ENCODE measurements at regions of chr11 and their contacts with region 1.

Region 1: DNA sequence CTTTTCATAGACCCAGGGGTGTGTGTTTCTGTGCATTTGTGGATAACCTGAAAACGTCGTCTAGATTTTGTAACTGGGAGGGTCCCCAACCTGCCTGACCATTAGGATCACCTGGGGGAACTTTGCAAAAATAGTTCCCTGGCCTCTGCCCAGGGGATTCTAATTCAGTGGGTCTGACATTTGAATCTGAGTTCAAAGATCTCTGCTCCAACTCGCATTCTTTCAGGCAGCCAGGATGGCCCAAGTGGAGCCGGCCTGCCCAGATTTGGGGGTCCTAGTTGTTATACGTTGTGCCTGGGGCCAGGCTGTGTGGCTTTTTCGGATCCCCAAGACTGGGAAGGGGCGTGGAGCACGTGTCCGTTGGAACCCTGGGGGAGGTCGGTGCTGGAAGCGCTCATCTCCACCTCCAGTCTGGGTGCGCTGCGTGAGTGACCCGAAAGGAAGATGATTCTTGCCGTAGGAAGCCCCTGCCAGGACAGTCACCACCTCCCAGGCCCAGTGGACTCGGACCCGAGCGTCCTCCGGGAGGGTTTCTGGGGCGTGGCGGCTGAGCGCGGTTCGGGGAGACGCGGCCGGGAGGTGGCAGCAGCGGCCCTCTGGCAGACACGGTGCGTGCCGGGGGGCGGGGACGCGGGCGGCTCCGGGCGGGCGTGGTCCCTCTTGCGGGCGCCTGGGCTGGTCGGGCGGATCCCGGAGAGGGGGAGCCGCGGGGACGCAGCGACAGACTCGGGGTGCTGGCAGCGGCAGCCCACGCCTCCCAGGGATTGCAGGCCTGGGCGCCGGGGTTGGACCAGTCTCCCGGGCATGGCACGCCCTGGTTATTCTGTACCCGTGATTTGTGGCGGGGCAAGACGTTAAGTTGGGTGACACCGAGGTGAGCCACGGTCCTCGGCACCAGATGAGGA is 29.2 kb upstream of the PLET1 start:
- DNase-seq: peak; percentile 91
- ATAC-seq: peak; percentile 92
- H3K4me3 Mint-ChIP-seq: peak overlapping the region; percentile 69
- H3K27ac Mint-ChIP-seq: peak overlapping the region; percentile 82
- H3K4me1 Mint-ChIP-seq: peaks cover 29% of the 10 kb centered on the region
- H3K27me3 Mint-ChIP-seq: no peaks in the 10 kb centered on the region

Region 2: GRCh38 chr11:112453601-112454577 is 164.0 kb after region 1 on chr11:
- CTCF ChIA-PET with region 1: interaction called, 4 read pairs
- POLR2A ChIA-PET with region 1: no interaction called
- intact Hi-C with region 1: loop called (anchors 1 to 2 kb)
- DNase-seq: peak; percentile 75
- ATAC-seq: no peak
- H3K4me3 Mint-ChIP-seq: no peak overlapping the region
- H3K27ac Mint-ChIP-seq: no peak overlapping the region
- H3K4me1 Mint-ChIP-seq: no peaks in the 10 kb centered on the region
- H3K27me3 Mint-ChIP-seq: no peaks in the 10 kb centered on the region

Region 3: GRCh38 chr11:112537846-112538330 is 248.0 kb after region 1 on chr11:
- CTCF ChIA-PET with region 1: no interaction called
- POLR2A ChIA-PET with region 1: no interaction called
- intact Hi-C with region 1: loop called (anchors 5 kb)
- DNase-seq: no peak
- ATAC-seq: peak; percentile 76
- H3K4me3 Mint-ChIP-seq: no peak overlapping the region
- H3K27ac Mint-ChIP-seq: peak overlapping the region; percentile 52
- H3K4me1 Mint-ChIP-seq: peaks cover 51% of the 10 kb centered on the region
- H3K27me3 Mint-ChIP-seq: peaks cover 9% of the 10 kb centered on the region

Region 4: DNA sequence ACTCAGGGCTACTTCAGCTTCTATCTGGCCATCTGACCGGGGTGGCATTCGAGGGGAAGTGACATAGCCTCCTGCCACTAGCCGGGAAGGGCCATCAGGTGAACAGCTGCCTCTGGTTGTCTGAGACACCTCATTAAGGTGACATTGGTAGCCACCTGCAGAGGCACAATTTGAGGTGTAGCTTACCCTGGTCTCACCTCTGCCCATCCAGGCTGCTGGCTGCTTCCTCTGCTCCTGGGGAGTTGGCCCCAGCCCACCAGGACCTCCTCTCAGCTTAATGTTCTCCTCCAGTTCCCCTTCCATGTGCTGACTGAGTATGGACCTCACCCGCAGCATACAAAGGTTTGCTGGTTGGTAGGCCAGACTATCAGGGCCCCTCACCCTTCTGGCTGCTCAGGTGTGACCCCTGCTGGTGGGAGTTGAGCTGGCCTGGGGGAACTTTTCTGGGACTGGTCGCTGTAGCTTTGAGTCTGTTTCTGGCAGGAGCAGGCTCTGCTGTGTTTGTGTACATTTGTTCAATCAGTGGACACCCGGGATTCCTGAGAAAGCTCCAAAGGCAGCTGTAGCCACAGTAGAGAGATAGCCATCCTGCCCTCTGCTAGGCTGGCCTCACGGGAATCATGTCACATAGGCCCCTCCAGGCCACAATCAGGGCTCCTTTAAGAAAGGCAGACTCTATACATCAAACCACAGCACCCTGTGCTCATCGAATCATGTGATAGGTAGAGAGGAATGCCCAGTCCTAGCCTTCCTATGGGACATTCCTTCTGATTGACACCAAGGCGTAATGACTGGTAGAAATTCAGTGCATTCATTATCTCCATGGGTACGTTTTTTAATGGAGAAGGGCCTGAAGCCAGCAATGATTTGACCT is 265.9 kb after region 1 on chr11:
- CTCF ChIA-PET with region 1: interaction called, 35 read pairs
- POLR2A ChIA-PET with region 1: no interaction called
- intact Hi-C with region 1: loop called (anchors 1 kb)
- DNase-seq: peak; percentile 86
- ATAC-seq: peak; percentile 91
- H3K4me3 Mint-ChIP-seq: no peak overlapping the region
- H3K27ac Mint-ChIP-seq: no peak overlapping the region
- H3K4me1 Mint-ChIP-seq: peaks cover 3% of the 10 kb centered on the region
- H3K27me3 Mint-ChIP-seq: no peaks in the 10 kb centered on the region

Region 5: GRCh38 chr11:112588252-112588694 is 298.4 kb after region 1 on chr11:
- CTCF ChIA-PET with region 1: interaction called, 4 read pairs
- POLR2A ChIA-PET with region 1: no interaction called
- intact Hi-C with region 1: loop called in 1 of 2 experiments (anchors 1 kb)
- DNase-seq: peak; percentile 64
- ATAC-seq: peak; percentile 94
- H3K4me3 Mint-ChIP-seq: no peak overlapping the region
- H3K27ac Mint-ChIP-seq: no peak overlapping the region
- H3K4me1 Mint-ChIP-seq: peaks cover 1% of the 10 kb centered on the region
- H3K27me3 Mint-ChIP-seq: no peaks in the 10 kb centered on the region

Region 6: DNA sequence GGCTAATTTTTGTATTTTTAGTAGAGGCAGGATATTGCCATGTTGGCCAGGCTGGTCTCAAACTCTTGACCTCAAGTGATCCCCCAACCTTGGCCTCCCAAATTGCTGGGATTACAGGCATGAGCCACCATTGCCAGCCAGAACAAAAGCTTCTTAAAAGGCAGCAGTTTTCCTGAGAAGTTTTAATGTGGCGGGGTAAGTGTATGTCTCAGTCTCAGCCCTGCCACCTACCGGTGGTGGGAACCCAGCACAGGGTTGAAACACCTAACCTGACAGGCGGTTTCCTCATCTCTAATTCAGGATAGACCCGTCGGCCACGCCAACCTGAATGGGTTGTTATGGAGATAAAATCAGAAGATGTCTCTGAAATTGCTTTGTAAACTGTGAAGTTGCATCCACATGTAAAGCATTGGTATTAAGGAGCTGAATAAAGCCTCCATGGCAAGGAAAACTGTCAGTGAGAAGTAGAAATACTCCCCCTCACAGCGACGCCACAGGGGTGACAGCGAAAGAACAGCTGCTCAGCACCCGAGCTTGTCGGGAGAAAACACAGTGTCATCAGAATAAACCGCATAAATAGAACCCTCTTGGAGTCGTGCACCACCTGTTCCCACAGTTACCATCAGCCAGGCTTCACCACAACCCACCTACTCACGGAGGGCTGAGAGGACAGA is 505.4 kb after region 1 on chr11:
- CTCF ChIA-PET with region 1: no interaction called
- POLR2A ChIA-PET with region 1: no interaction called
- intact Hi-C with region 1: loop called in 1 of 2 experiments (anchors 10 kb)
- DNase-seq: peak; percentile 64
- ATAC-seq: peak; percentile 72
- H3K4me3 Mint-ChIP-seq: no peak overlapping the region
- H3K27ac Mint-ChIP-seq: no peak overlapping the region
- H3K4me1 Mint-ChIP-seq: peaks cover 2% of the 10 kb centered on the region
- H3K27me3 Mint-ChIP-seq: no peaks in the 10 kb centered on the region